ENCODE measurements at regions of chr2 and their contacts with region 1.

Region 1: GRCh38 chr2:101047075-101047766 is 45.1 kb downstream of the RPL31 start:
- DNase-seq: peak; percentile 28 to 48
- ATAC-seq: peak; percentile 44 to 56
- H3K4me3 ChIP-seq: no peak overlapping the region
- H3K27ac ChIP-seq: peak overlapping the region; percentile 66 to 80 (median 72)
- H3K4me1 ChIP-seq: peaks cover 10 to 15% of the 10 kb centered on the region in 2 donors
- H3K27me3 ChIP-seq: no peaks in the 10 kb centered on the region
- CTCF ChIP-seq: no peak
- POLR2A ChIP-seq: no peak

Region 2: GRCh38 chr2:101036562-101037457 is 10.4 kb before region 1 on chr2:
- in situ Hi-C with region 1: no loop called
- intact Hi-C with region 1: no loop called
- DNase-seq: no peak
- ATAC-seq: no peak
- H3K4me3 ChIP-seq: no peak overlapping the region
- H3K27ac ChIP-seq: peak overlapping the region; percentile 23 to 41 (median 36)
- H3K4me1 ChIP-seq: peaks cover 0 to under 1% of the 10 kb centered on the region in 2 donors
- H3K27me3 ChIP-seq: no peaks in the 10 kb centered on the region
- CTCF ChIP-seq: peak; percentile 22 to 45 (median 34)
- POLR2A ChIP-seq: no peak

Region 3: DNA sequence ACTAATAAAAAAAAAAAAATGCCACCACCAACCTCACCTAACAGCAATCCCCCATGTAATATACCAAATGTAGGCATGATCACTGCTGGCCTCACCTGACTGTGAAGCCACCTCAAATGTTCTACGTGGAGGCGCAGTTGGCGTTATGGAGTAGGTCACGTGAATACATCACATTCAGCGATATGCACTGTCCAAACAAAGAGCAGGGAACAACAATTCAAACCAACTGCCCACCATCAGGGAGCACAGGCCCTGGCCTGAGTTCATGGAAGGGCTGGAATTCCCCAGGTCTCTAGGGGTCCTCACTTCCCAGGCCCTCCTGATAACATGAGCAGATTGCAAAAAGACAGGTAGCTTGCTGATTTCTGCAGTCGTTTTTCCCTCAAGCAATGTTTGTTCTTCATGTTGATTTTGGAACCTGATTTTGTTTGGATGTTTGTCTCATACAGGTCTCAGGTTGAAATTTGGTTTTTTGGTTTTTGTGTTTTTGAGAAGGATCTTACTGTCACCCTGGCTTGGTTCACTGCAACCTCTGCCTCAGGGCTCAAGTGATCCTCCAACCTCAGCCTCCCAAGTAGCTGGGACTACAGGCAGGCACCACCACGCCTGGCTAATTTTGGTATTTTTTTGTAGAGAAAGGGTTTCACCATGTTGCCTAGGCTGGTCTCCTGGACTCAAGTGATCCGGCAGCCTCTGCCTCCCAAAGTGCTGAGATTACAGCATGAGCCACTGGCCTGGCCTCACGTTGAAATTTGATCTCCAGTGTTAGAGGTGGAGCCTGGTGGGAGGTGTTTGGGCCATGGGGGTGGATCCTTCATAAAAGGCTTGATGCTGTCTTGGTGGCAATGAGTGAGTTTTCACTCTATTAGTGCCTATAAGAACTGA is 88.4 kb after region 1 on chr2:
- in situ Hi-C with region 1: loop called in 1 of 4 experiments (anchors 10 kb)
- intact Hi-C with region 1: no loop called
- DNase-seq: peak; percentile 61 to 72
- ATAC-seq: peak; percentile 51 to 70
- H3K4me3 ChIP-seq: no peak overlapping the region
- H3K27ac ChIP-seq: peak overlapping the region; percentile 90 to 100 (median 99)
- H3K4me1 ChIP-seq: peaks cover 73 to 76% of the 10 kb centered on the region in 2 donors
- H3K27me3 ChIP-seq: no peaks in the 10 kb centered on the region
- CTCF ChIP-seq: no peak
- POLR2A ChIP-seq: peak; percentile 40 to 74

Measured in gastrocnemius medialis (tissue), 4 donors.